OCI-LY7 (cell line): ENCODE measurements at regions of chr7 and their contacts with region 1.

Region 1: DNA sequence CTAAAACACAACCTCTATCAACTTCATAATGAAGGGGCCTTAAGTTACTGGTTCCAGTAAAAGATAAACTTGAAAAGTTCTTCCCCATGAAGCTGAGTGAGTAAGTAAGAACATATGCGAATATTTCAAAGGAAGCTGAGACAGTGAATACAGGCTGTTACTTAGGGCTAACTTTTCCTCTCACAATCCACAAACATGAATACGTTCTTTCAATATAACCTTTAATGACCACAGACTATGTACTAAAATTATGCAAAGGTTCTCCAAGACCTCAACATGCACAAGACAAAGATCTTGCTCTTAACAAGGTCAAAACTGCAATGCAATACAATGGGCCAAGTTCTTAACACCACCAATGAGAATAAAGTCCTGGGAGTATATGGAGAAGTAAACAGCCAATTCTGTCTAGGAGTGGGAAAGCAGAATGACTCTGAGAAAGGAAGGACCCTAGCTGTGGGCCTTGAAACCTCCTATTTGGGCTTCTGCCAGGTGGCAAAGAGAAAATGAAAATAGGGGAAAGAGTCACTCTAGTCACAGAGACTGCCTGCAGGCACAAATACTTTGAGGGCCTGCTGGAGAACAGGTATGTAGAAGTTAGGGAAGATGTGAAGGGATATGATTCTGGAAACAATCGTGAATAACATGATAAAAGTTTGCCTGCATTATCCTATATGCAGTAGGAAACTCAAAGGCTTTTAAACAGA is 43.7 kb downstream of the OSBPL3 start:
- DNase-seq: no peak
- H3K4me3 ChIP-seq: no peak overlapping the region
- H3K27ac ChIP-seq: peak overlapping the region; percentile 27
- H3K4me1 ChIP-seq: peaks cover 82% of the 10 kb centered on the region
- CTCF ChIP-seq: no peak

Region 2: GRCh38 chr7:24948739-24949138 is 12.5 kb after region 1 on chr7:
- CTCF ChIA-PET with region 1: interaction called, 5 read pairs
- POLR2A ChIA-PET with region 1: interaction called, 18 read pairs
- intact Hi-C with region 1: no loop called
- DNase-seq: no peak
- H3K4me3 ChIP-seq: no peak overlapping the region
- H3K27ac ChIP-seq: no peak overlapping the region
- H3K4me1 ChIP-seq: peaks cover 36% of the 10 kb centered on the region
- CTCF ChIP-seq: no peak

Region 3: GRCh38 chr7:24965831-24966709 is 29.8 kb after region 1 on chr7:
- CTCF ChIA-PET with region 1: no interaction called
- POLR2A ChIA-PET with region 1: interaction called, 5 read pairs
- intact Hi-C with region 1: loop called (anchors 2 kb)
- DNase-seq: peak; percentile 83
- H3K4me3 ChIP-seq: peak overlapping the region; percentile 34
- H3K27ac ChIP-seq: peak overlapping the region; percentile 81
- H3K4me1 ChIP-seq: peaks cover 88% of the 10 kb centered on the region
- CTCF ChIP-seq: no peak; the same call in 1 of the 2 replicates